Kidney (tissue), 22 donors: ENCODE measurements at regions of chr1 and their contacts with region 1.

Region 1: GRCh38 chr1:218510153-218510772 is 165.1 kb downstream of the TGFB2 start:
- DNase-seq: peak in 1 of 5 donors; percentile 20
- H3K4me3 ChIP-seq: no peak overlapping the region
- H3K27ac ChIP-seq: no peak overlapping the region
- H3K4me1 ChIP-seq: no peaks in the 10 kb centered on the region
- H3K27me3 ChIP-seq: no peaks in the 10 kb centered on the region
- CTCF ChIP-seq: no peak

Region 2: DNA sequence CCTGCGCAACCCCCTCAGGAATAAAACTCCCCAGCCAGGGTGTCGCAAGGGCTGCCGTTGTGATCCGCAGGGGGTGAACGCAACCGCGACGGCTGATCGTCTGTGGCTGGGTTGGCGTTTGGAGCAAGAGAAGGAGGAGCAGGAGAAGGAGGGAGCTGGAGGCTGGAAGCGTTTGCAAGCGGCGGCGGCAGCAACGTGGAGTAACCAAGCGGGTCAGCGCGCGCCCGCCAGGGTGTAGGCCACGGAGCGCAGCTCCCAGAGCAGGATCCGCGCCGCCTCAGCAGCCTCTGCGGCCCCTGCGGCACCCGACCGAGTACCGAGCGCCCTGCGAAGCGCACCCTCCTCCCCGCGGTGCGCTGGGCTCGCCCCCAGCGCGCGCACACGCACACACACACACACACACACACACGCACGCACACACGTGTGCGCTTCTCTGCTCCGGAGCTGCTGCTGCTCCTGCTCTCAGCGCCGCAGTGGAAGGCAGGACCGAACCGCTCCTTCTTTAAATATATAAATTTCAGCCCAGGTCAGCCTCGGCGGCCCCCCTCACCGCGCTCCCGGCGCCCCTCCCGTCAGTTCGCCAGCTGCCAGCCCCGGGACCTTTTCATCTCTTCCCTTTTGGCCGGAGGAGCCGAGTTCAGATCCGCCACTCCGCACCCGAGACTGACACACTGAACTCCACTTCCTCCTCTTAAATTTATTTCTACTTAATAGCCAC is 164.4 kb before region 1 on chr1:
- intact Hi-C with region 1: loop called (anchors 10 kb)
- DNase-seq: peak; percentile 76 to 88 (median 83)
- H3K4me3 ChIP-seq: peak overlapping the region; percentile 73 to 81 (median 78)
- H3K27ac ChIP-seq: peak overlapping the region; percentile 37 to 78
- H3K4me1 ChIP-seq: peaks cover 0 to 7% (median 0%) of the 10 kb centered on the region in 3 donors
- H3K27me3 ChIP-seq: no peaks in the 10 kb centered on the region
- CTCF ChIP-seq: no peak

Region 3: GRCh38 chr1:218658899-218659298 is 148.6 kb after region 1 on chr1:
- intact Hi-C with region 1: no loop called
- DNase-seq: no peak
- H3K4me3 ChIP-seq: no peak overlapping the region
- H3K27ac ChIP-seq: no peak overlapping the region
- H3K4me1 ChIP-seq: no peaks in the 10 kb centered on the region
- H3K27me3 ChIP-seq: no peaks in the 10 kb centered on the region
- CTCF ChIP-seq: no peak

Region 4: GRCh38 chr1:218705911-218706893 is 195.9 kb after region 1 on chr1:
- intact Hi-C with region 1: no loop called
- DNase-seq: peak in 2 of 5 donors; percentile 25 to 38
- H3K4me3 ChIP-seq: no peak overlapping the region
- H3K27ac ChIP-seq: no peak overlapping the region
- H3K4me1 ChIP-seq: no peaks in the 10 kb centered on the region
- H3K27me3 ChIP-seq: no peaks in the 10 kb centered on the region
- CTCF ChIP-seq: no peak